ENCODE measurements at regions of chr20 and their contacts with region 1.

Region 1: DNA sequence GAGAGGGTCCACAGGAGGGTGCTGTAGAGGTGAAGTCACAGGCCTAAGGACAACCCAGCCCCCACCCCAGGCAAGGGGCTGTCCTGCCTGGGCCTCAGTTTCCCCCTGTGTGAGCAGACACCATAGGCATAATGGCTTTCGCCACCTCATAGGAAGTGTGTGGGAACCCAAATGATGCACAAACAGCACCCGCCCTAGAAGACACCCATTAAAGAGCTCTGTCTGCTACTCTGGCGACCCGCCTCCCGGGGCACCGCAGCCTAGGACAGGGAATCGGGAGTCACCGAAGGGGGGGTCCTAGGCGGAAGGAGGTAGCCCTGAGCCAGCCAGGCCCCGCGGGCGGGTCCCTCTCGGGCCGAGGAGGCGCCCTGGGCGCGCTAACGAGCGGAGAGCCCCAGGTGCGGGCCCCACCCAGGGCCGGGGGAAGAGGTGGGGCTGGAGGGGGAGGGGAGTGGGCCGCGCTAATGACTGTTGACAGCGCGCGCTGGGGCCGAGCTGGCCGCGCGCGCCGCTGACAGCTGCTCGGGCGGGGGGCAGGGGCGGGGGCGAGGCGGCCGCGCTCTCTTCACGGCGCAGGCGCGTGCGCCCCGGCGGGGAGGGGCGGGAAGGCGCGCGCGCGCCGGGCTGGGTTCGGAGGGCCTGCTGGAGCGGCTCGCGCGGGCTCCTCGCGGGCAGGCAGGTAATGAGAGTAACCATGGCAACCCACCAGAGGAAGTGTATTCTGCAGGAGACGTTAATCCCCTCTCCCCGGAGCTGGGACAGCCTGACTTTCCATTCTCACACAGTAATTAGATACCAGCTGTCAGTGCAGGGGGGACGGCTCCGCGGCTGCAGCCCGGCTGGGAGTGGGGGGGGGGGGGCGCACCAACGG is 48.9 kb downstream of the NOL4L start:
- DNase-seq: peak; percentile 85 to 94 (median 88)
- H3K4me3 ChIP-seq: peak overlapping the region; percentile 18 to 57
- H3K4me3 Mint-ChIP-seq: peak overlapping the region; percentile 78 to 94 (median 86)
- H3K27ac ChIP-seq: peak overlapping the region; percentile 77
- H3K27ac Mint-ChIP-seq: peak overlapping the region; percentile 95 to 99 (median 97)
- H3K4me1 ChIP-seq: peaks cover 90% of the 10 kb centered on the region
- H3K4me1 Mint-ChIP-seq: peaks cover 61 to 91% (median 77%) of the 10 kb centered on the region in 4 donors
- H3K27me3 ChIP-seq: no peaks in the 10 kb centered on the region
- H3K27me3 Mint-ChIP-seq: no peaks in the 10 kb centered on the region

Region 2: GRCh38 chr20:32277361-32278198 is 258.6 kb before region 1 on chr20 and contains the start of gene KIF3B:
- CTCF ChIA-PET with region 1: no interaction called
- POLR2A ChIA-PET with region 1: no interaction called
- intact Hi-C with region 1: loop called (anchors 1 kb)
- DNase-seq: peak; percentile 87 to 90 (median 88)
- H3K4me3 ChIP-seq: peak within 1 kb of the TSS; percentile 68 to 96
- H3K4me3 Mint-ChIP-seq: peak within 1 kb of the TSS; percentile 91 to 94 (median 92)
- H3K27ac ChIP-seq: peak within 1 kb of the TSS; percentile 85
- H3K27ac Mint-ChIP-seq: peak within 1 kb of the TSS; percentile 88 to 98 (median 96)
- H3K4me1 ChIP-seq: peaks cover 27% of the 10 kb centered on the region
- H3K4me1 Mint-ChIP-seq: peaks cover 27 to 52% (median 42%) of the 10 kb centered on the region in 4 donors
- H3K27me3 ChIP-seq: no peaks in the 10 kb centered on the region
- H3K27me3 Mint-ChIP-seq: no peaks in the 10 kb centered on the region
- total RNA-seq, gene KIF3B: 14.2 to 14.5 TPM

Region 3: DNA sequence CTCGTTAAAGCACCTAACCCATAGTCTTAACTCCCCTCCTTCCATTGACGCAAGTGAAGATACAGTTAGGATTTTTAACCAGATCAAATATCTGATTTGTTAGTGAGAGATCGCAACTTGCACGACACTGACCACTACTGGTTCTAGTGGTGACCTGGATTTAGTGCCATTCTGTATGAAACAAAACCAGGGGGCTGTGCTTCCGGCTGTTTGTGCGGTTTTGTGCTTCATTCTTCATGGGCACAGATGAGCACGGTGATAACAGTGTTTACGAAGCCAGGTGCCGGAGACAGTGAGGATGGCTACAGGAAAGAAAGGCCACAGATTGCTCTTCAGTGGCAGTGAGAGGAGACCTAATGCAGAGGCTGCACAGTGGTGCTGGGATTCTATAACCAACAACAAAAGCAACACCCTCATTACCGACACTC is 26.5 kb before region 1 on chr20:
- CTCF ChIA-PET with region 1: interaction called, 7 read pairs
- POLR2A ChIA-PET with region 1: interaction called, 64 read pairs
- intact Hi-C with region 1: no loop called
- DNase-seq: peak; percentile 76 to 89 (median 82)
- H3K4me3 ChIP-seq: peak overlapping the region in 1 of 2 donors; percentile 43
- H3K4me3 Mint-ChIP-seq: peak overlapping the region; percentile 77 to 86 (median 82)
- H3K27ac ChIP-seq: peak overlapping the region; percentile 60
- H3K27ac Mint-ChIP-seq: peak overlapping the region; percentile 92 to 97 (median 94)
- H3K4me1 ChIP-seq: peaks cover 71% of the 10 kb centered on the region
- H3K4me1 Mint-ChIP-seq: peaks cover 56 to 90% (median 68%) of the 10 kb centered on the region in 4 donors
- H3K27me3 ChIP-seq: no peaks in the 10 kb centered on the region
- H3K27me3 Mint-ChIP-seq: no peaks in the 10 kb centered on the region

Region 4: DNA sequence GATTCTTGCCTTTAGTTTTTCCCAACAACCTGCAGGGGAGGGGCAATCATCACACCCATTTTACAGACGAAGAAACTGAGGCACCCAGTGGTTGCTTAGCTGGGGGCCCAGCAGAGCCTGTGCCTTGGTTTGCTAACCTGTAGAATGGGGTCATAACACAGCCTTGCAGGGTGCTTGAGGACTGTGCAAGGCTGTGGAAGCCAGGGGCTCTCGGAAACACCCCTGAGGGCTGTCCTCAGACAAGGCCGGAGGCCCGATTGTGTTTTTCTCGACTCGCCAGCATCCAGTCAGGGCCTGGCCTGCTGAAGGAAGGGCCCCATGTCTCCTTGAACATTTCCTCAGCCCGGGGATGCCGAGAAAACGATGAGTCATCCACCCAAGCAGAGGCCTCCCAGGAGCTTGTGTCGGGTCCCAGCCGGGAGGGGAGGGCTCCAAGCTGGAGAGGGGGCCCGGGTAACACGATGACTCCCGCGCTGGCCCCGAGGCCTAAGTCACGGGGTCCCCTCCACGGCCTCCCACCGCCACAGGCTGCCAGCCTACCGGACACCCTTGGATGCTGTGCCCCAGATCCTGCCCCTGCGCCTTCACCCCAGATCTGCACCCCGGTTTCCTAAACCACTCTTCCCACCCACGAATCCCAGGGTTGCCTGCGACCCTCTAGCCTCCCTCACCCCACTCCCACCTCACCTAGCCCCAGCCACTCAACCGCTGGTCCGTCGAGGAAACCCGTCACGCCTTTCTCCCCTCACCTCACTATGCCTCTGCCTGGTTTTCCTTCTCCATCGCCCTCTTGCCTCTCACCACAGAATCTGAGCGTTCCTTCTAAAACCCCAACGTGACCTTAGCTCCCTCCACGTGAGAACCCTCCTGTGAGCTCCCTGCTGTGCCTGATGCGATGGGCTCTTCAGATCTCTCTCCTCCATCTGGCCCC is 38.4 kb after region 1 on chr20:
- CTCF ChIA-PET with region 1: interaction called, 6 read pairs
- POLR2A ChIA-PET with region 1: interaction called, 283 read pairs
- intact Hi-C with region 1: no loop called
- DNase-seq: peak in 1 of 5 donors; percentile 48
- H3K4me3 ChIP-seq: no peak overlapping the region
- H3K4me3 Mint-ChIP-seq: no peak overlapping the region
- H3K27ac ChIP-seq: no peak overlapping the region
- H3K27ac Mint-ChIP-seq: peak overlapping the region in 5 of 7 donors; percentile 44 to 83 (median 75)
- H3K4me1 ChIP-seq: peaks cover 96% of the 10 kb centered on the region
- H3K4me1 Mint-ChIP-seq: peaks cover 0 to 46% (median 22%) of the 10 kb centered on the region in 4 donors
- H3K27me3 ChIP-seq: no peaks in the 10 kb centered on the region
- H3K27me3 Mint-ChIP-seq: no peaks in the 10 kb centered on the region

Region 5: DNA sequence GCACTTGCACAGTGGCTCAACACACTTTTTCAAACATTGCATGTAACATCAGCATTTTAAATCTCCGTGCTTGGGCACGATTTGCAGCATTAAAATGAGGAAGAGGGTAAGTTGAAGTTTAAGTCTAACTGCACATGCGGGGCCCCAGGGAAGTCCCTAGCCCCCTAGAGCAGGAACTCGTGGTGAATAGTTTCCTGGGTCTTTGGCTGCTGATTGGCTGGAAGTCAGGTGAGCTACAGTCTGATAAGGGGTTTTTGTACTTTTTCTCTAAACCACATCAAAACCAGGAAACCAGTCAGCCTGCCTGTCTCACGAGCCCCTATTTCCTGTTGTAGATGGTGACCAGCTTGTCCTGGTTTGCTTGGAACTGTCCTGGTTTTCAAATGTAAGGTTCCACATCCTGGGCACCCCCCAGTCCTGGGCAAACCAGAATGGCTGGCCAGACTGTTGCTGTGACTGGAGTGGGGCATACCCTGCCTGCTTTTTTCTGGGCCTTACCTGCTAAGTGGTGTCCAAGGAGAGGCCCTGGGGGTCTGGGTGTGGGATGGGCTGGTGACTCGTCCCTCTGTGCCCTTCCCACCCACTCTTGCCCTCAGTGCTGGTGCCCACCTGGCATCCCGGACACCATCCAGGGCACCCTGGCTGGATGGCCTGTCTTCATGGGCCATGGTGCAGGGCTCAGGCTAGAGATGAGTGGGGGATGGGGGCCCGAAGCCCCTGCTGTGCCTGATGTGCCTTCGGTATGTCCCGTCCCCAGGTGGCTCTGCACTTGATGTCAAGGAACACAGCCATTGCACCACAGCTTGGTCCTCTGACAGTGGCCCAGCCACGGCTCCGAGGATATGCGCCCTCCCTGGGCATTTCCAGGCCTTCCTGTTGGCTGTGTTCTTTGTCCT is 436.2 kb after region 1 on chr20:
- CTCF ChIA-PET with region 1: no interaction called
- POLR2A ChIA-PET with region 1: no interaction called
- intact Hi-C with region 1: loop called (anchors 10 kb)
- DNase-seq: peak; percentile 91 to 97 (median 93)
- H3K4me3 ChIP-seq: peak overlapping the region; percentile 13 to 42
- H3K4me3 Mint-ChIP-seq: peak overlapping the region in 1 of 8 donors; percentile 36
- H3K27ac ChIP-seq: peak overlapping the region; percentile 94
- H3K27ac Mint-ChIP-seq: no peak overlapping the region
- H3K4me1 ChIP-seq: peaks cover 91% of the 10 kb centered on the region
- H3K4me1 Mint-ChIP-seq: peaks cover 8 to 70% (median 34%) of the 10 kb centered on the region in 4 donors
- H3K27me3 ChIP-seq: no peaks in the 10 kb centered on the region
- H3K27me3 Mint-ChIP-seq: no peaks in the 10 kb centered on the region

Measured in CD4-positive, alpha-beta memory T cell (primary cell).